ENCODE measurements at regions of chr11 and their contacts with region 1.

Region 1: DNA sequence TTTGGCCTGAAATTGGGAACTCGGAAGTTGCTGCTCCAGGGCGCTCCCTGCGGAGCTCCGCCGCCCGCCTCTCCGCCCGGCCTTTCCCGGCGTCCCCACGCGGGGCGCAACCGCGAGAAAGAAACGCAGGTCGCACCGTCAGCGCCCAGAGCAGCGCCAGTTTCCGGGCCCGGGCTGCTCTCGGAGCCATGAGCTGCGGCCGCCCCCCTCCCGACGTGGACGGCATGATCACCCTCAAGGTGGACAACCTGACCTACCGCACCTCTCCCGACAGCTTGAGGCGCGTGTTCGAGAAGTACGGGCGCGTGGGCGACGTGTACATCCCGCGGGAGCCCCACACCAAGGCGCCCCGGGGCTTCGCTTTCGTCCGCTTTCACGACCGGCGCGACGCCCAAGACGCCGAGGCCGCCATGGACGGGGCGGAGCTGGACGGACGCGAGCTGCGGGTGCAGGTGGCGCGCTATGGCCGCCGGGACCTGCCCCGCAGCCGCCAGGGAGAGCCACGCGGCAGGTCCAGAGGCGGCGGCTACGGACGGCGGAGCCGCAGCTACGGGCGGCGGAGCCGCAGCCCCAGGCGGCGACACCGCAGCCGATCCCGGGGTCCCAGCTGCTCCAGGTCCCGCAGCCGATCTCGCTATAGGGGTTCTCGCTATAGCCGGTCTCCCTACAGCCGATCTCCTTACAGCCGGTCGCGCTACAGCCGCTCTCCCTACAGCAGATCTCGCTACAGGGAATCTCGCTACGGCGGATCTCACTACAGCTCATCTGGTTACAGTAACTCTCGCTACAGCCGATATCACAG is 521 bp downstream of the SRSF8 start:
- DNase-seq: peak; percentile 80
- ATAC-seq: peak; percentile 74
- H3K4me3 Mint-ChIP-seq: peak overlapping the region; percentile 94
- H3K27ac Mint-ChIP-seq: peak overlapping the region; percentile 97
- H3K4me1 Mint-ChIP-seq: peaks cover 25% of the 10 kb centered on the region
- H3K27me3 Mint-ChIP-seq: peaks cover 8% of the 10 kb centered on the region

Region 2: GRCh38 chr11:94623120-94623735 is 444.0 kb before region 1 on chr11:
- CTCF ChIA-PET with region 1: interaction called, 14 read pairs
- POLR2A ChIA-PET with region 1: no interaction called
- DNase-seq: peak; percentile 63
- ATAC-seq: peak; percentile 82
- H3K4me3 Mint-ChIP-seq: no peak overlapping the region
- H3K27ac Mint-ChIP-seq: no peak overlapping the region
- H3K4me1 Mint-ChIP-seq: no peaks in the 10 kb centered on the region
- H3K27me3 Mint-ChIP-seq: peaks cover 3% of the 10 kb centered on the region

Region 3: DNA sequence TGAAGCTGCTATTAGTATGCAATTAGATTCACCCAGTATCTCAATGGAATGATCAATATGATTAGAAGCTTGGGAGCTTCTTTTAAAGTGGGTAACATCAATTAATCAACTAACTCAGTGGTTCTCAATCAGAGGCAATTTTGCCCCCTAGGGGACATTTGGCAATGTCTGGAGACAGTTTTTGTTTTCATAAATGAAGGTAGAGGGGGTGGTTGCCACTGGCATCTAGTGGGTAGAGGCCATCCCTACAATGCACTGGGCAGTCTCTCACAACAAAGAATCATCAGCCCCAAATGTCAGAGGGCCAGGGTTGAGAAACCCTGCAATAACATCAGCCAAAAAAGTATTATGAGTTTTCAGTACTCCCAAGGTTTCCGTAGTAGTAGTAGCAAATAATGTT is 305.0 kb before region 1 on chr11:
- CTCF ChIA-PET with region 1: no interaction called
- POLR2A ChIA-PET with region 1: no interaction called
- DNase-seq: peak; percentile 28
- ATAC-seq: no peak
- H3K4me3 Mint-ChIP-seq: no peak overlapping the region
- H3K27ac Mint-ChIP-seq: no peak overlapping the region
- H3K4me1 Mint-ChIP-seq: peaks cover 9% of the 10 kb centered on the region
- H3K27me3 Mint-ChIP-seq: peaks cover 20% of the 10 kb centered on the region

Region 4: GRCh38 chr11:95055283-95055897 is 11.8 kb before region 1 on chr11:
- CTCF ChIA-PET with region 1: interaction called, 21 read pairs
- POLR2A ChIA-PET with region 1: no interaction called
- DNase-seq: no peak
- ATAC-seq: no peak
- H3K4me3 Mint-ChIP-seq: no peak overlapping the region
- H3K27ac Mint-ChIP-seq: no peak overlapping the region
- H3K4me1 Mint-ChIP-seq: no peaks in the 10 kb centered on the region
- H3K27me3 Mint-ChIP-seq: peaks cover 39% of the 10 kb centered on the region

Region 5: GRCh38 chr11:95089620-95090542 is 22.6 kb after region 1 on chr11 and contains the start of gene ENDOD1:
- CTCF ChIA-PET with region 1: interaction called, 233 read pairs
- POLR2A ChIA-PET with region 1: interaction called, 103 read pairs
- DNase-seq: peak; percentile 88
- ATAC-seq: peak; percentile 96
- H3K4me3 Mint-ChIP-seq: peak within 1 kb of the TSS; percentile 90
- H3K27ac Mint-ChIP-seq: peak within 1 kb of the TSS; percentile 99
- H3K4me1 Mint-ChIP-seq: peaks cover 66% of the 10 kb centered on the region
- H3K27me3 Mint-ChIP-seq: no peaks in the 10 kb centered on the region
- total RNA-seq, gene ENDOD1: 23.4 to 23.9 TPM

Region 6: GRCh38 chr11:95138448-95138847 is 71.2 kb after region 1 on chr11:
- CTCF ChIA-PET with region 1: interaction called, 71 read pairs
- POLR2A ChIA-PET with region 1: interaction called, 4 read pairs
- DNase-seq: no peak
- ATAC-seq: peak; percentile 74
- H3K4me3 Mint-ChIP-seq: no peak overlapping the region
- H3K27ac Mint-ChIP-seq: no peak overlapping the region
- H3K4me1 Mint-ChIP-seq: peaks cover 14% of the 10 kb centered on the region
- H3K27me3 Mint-ChIP-seq: peaks cover 13% of the 10 kb centered on the region

Region 7: DNA sequence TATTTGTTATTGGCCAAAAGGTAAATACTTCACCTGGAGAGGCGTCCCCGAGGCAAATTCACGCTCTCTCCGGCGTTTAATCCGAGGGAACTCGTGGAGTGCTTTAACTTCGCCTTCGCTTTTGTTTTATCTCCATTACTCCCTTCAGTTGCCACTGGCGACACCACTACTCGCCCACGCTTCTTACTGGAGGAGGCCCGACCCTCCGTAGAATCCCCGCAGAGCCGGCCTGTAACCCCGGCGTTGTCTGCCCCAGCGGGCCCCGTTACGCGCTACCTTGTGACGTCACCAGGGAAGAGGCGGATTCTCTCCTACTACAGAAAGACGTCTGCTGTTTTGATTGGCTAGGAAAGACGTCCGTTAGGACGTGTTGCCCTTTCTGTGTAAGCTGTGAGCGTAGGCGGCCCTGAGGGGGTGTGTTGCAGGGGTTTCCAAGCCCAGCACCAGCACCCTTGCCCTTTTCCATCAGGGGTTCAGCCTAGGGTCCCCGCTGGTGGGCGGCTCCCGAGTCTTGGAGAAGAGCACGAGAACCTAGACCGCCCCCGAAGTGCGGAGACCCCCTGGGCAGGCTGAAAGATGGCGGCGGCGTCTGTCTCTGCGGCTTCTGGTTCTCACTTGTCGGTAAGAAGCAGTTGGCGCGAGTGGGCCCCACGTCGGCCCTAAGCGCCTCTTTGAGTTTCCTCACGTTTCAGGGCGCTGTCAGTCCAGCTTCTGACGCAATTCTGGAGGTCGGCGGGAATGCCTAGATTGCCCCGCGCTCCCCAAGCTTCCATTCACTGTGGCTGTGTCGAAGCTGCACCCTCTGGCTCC is 723.1 kb after region 1 on chr11 and contains the start of gene CEP57:
- CTCF ChIA-PET with region 1: interaction called, 10 read pairs
- POLR2A ChIA-PET with region 1: interaction called, 32 read pairs
- DNase-seq: peak; percentile 97
- ATAC-seq: peak; percentile 69
- H3K4me3 Mint-ChIP-seq: peak within 1 kb of the TSS; percentile 99
- H3K27ac Mint-ChIP-seq: peak within 1 kb of the TSS; percentile 100
- H3K4me1 Mint-ChIP-seq: peaks cover 55% of the 10 kb centered on the region
- H3K27me3 Mint-ChIP-seq: no peaks in the 10 kb centered on the region
- total RNA-seq, gene CEP57: 85.4 to 86.6 TPM

Measured in activated CD8-positive, alpha-beta T cell treated with anti-CD3 and anti-CD28 coated beads, Interleukin-2, amount 10 ng/mL, durations not matched to agents 7 days and 5 days (primary cell).